A549 (cell line): ENCODE measurements at regions of chr15 and their contacts with region 1.

Region 1: GRCh38 chr15:73560501-73561117 is 72.6 kb downstream of the NPTN start:
- DNase-seq: peak; percentile 30 to 80
- ATAC-seq: peak; percentile 74 to 88; a peak in 5 of 6 replicates
- H3K4me3 ChIP-seq: no peak overlapping the region
- H3K27ac ChIP-seq: no peak overlapping the region
- H3K4me1 ChIP-seq: 0 out of 3 replicates have a peak, but pooled peaks cover 6% of the 10 kb centered on the region
- CTCF ChIP-seq: peak; percentile 87
- EP300 ChIP-seq: no peak
- POLR2A ChIP-seq: no peak
- RAD21 ChIP-seq: peak; percentile 83 to 88

Region 2: GRCh38 chr15:73225358-73226015 is 335.1 kb before region 1 on chr15:
- CTCF ChIA-PET with region 1: no interaction called
- POLR2A ChIA-PET with region 1: no interaction called
- DNase-seq: peak in 1 of 2 experiments; percentile 23
- ATAC-seq: no peak
- H3K4me3 ChIP-seq: no peak overlapping the region
- H3K27ac ChIP-seq: peak overlapping the region; percentile 27 to 71; a peak in 5 of 6 replicates
- H3K4me1 ChIP-seq: peaks cover 8% of the 10 kb centered on the region; the same call in 1 of the 3 replicates
- CTCF ChIP-seq: no peak
- EP300 ChIP-seq: no peak
- POLR2A ChIP-seq: no peak
- RAD21 ChIP-seq: no peak

Region 3: GRCh38 chr15:73305331-73306211 is 255.0 kb before region 1 on chr15:
- CTCF ChIA-PET with region 1: interaction called, 21 read pairs
- POLR2A ChIA-PET with region 1: no interaction called
- DNase-seq: peak; percentile 81 to 86
- ATAC-seq: peak; percentile 91 to 95
- H3K4me3 ChIP-seq: no peak overlapping the region
- H3K27ac ChIP-seq: no peak overlapping the region
- H3K4me1 ChIP-seq: no peaks in the 10 kb centered on the region
- CTCF ChIP-seq: peak; percentile 83
- EP300 ChIP-seq: no peak
- POLR2A ChIP-seq: no peak
- RAD21 ChIP-seq: peak; percentile 89 to 95

Region 4: GRCh38 chr15:73573572-73573971 is 13.0 kb after region 1 on chr15:
- CTCF ChIA-PET with region 1: interaction called, 33 read pairs
- POLR2A ChIA-PET with region 1: no interaction called
- DNase-seq: no peak
- ATAC-seq: no peak
- H3K4me3 ChIP-seq: no peak overlapping the region
- H3K27ac ChIP-seq: no peak overlapping the region
- H3K4me1 ChIP-seq: no peaks in the 10 kb centered on the region
- CTCF ChIP-seq: no peak
- EP300 ChIP-seq: no peak
- POLR2A ChIP-seq: no peak
- RAD21 ChIP-seq: no peak

Region 5: DNA sequence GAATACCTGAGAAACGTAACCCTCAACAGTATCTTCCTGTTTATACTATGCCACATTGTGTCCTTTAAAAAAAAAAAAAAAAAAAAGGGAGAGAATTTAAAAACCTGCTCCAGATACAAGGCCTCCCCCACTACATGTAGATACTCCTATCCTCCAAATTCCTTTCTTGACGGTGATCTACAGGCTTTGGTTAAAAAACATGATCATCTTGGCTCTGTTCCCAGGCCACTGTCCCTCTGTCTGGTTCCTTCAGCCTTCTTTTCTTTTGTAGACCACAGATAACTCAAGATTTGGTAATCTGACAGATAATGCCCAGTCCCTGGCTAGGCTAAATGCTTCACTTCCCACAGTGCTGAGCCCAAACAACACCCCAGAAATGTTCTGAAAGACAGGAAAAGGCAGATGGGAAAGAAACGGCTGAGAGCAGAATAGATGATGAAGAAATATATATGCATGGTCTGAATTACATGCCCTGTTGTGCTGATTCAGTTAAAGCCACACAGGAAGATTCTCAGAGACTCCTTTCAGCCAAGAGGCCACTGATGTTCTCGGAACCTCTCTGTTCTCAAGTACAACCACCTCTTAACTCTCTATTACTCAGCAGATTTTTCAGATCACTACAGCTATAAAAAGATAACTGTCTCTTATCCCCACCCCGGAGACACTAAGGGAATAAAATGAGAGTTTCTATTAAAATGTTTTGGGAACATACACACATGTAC is 24.3 kb after region 1 on chr15:
- CTCF ChIA-PET with region 1: interaction called, 11 read pairs
- POLR2A ChIA-PET with region 1: no interaction called
- DNase-seq: no peak
- ATAC-seq: no peak
- H3K4me3 ChIP-seq: no peak overlapping the region
- H3K27ac ChIP-seq: no peak overlapping the region
- H3K4me1 ChIP-seq: no peaks in the 10 kb centered on the region
- CTCF ChIP-seq: no peak
- EP300 ChIP-seq: no peak
- POLR2A ChIP-seq: no peak
- RAD21 ChIP-seq: no peak

Region 6: DNA sequence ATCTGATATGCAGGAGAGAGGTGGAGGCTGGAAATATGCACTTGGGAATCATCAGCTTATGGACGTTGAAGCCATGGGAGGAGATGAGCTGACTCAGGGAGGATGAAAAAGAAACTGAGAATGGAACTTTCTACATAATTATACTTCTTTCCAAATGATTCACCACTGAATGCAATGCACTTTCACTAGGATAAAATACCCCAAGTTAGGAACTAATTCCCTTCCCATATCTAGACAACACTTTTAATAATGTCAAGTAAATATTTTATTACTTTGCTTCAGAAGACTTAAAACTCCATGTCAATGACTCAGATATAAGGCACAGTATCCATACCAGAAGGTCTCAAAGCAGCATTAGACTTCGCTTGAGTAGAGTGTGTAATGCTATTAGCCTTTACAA is 48.3 kb after region 1 on chr15:
- CTCF ChIA-PET with region 1: interaction called, 16 read pairs
- POLR2A ChIA-PET with region 1: no interaction called
- DNase-seq: no peak
- ATAC-seq: no peak
- H3K4me3 ChIP-seq: no peak overlapping the region
- H3K27ac ChIP-seq: no peak overlapping the region
- H3K4me1 ChIP-seq: 0 out of 3 replicates have a peak, but pooled peaks cover 3% of the 10 kb centered on the region
- CTCF ChIP-seq: no peak
- EP300 ChIP-seq: no peak
- POLR2A ChIP-seq: no peak
- RAD21 ChIP-seq: no peak

Region 7: GRCh38 chr15:73654659-73655058 is 94.0 kb after region 1 on chr15:
- CTCF ChIA-PET with region 1: no interaction called
- POLR2A ChIA-PET with region 1: no interaction called
- DNase-seq: peak in 1 of 2 experiments; percentile 34
- ATAC-seq: no peak
- H3K4me3 ChIP-seq: no peak overlapping the region
- H3K27ac ChIP-seq: no peak overlapping the region
- H3K4me1 ChIP-seq: no peaks in the 10 kb centered on the region
- CTCF ChIP-seq: no peak
- EP300 ChIP-seq: no peak
- POLR2A ChIP-seq: no peak
- RAD21 ChIP-seq: no peak